MCF 10A (cell line): ENCODE measurements at regions of chr4 and their contacts with region 1.

Region 1: DNA sequence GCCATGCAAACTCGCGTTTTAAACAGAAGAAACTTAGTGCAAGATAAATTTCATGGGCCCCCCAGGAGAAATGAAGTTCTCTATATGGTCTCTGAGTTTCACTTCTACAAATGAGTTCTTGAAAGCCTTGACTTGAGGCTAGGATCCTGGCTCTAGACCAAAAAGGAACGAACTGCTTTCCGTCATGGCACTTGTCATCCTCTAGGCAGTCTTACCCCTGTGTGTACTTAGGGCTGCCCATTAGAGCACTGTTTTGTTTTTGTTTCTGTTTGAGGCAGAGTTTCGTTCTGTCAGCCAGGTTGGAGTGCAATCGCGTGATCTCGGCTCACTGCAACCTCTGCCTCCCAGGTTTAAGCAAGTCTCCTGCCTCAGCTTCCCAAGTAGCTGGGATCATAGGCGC is 29.0 kb downstream of the RNF4 start:
- DNase-seq: no peak
- H3K4me3 Mint-ChIP-seq: no peak overlapping the region
- H3K27ac Mint-ChIP-seq: no peak overlapping the region
- H3K4me1 Mint-ChIP-seq: no peaks in the 10 kb centered on the region
- H3K27me3 Mint-ChIP-seq: no peaks in the 10 kb centered on the region
- CTCF ChIP-seq: no peak

Region 2: DNA sequence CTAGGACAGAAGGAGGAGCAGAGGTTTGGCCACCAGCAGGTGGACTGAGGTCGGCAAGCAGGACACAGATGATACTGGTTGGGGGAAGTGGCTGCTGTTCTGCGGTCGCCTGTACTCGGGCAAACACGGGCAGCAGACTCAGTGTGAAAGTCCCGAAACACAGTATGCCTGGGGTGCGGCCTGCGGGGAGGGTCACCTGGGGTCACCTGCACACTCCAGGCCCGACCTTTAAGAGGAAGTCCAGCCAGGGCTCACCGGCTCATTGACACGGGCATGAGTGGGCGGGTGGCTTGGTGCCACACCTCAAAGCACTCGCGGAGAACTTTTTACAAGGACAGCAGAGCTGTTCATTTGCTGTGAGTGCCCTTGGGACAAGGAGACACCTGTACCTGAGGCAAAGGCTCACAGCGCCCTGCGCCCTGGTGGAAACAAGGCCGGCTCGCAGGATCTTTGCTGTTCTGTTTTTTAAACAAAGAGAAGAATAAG is 164.5 kb before region 1 on chr4:
- CTCF ChIA-PET with region 1: no interaction called
- POLR2A ChIA-PET with region 1: no interaction called
- intact Hi-C with region 1: no loop called
- DNase-seq: peak; percentile 23
- H3K4me3 Mint-ChIP-seq: no peak overlapping the region
- H3K27ac Mint-ChIP-seq: no peak overlapping the region
- H3K4me1 Mint-ChIP-seq: peaks cover 15% of the 10 kb centered on the region
- H3K27me3 Mint-ChIP-seq: no peaks in the 10 kb centered on the region
- CTCF ChIP-seq: no peak

Region 3: GRCh38 chr4:2484993-2485392 is 12.9 kb before region 1 on chr4:
- CTCF ChIA-PET with region 1: interaction called, 6 read pairs
- POLR2A ChIA-PET with region 1: interaction called, 11 read pairs
- intact Hi-C with region 1: no loop called
- DNase-seq: no peak
- H3K4me3 Mint-ChIP-seq: no peak overlapping the region
- H3K27ac Mint-ChIP-seq: peak overlapping the region; percentile 22
- H3K4me1 Mint-ChIP-seq: peaks cover 43% of the 10 kb centered on the region
- H3K27me3 Mint-ChIP-seq: no peaks in the 10 kb centered on the region
- CTCF ChIP-seq: no peak